HepG2 (cell line): ENCODE measurements at regions of chr20 and their contacts with region 1.

Region 1: DNA sequence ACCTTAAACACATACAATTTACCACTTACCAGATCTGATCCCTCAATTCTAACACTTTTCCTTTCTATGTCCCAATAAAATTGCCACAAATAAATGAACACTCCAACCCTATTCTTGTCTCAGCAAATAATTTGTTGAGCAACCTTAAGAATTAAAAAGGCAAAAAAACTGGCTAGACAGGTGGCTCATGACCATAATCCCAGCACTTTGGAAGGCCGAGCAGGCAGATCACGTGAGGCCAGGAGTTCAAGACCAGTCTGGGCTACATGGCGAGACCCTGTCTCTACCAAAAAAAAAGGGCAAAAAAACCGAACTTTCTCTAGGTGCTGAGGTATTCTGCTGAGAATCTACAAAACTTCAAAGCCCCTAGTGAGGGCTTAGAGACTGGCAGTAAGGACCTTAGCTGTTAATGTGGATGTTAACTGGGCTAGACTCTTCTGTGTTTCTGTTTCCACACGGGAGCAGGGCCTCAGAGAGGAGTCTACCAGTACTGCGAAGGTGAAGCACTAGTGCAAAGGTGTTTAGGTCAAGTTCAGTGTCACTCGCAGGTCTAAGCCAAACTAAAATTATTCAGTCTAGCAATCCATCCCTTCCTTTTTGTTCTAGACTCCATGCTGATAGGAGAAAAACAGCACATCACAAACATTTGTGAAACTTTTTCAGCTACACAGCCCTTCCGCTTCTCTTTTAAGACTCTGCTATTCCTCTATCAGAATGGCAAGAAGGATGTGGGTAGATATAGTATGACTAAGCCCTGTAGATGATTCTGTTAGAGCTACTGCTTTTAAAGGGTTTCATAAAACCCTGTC is 2.6 kb downstream of the FASTKD5 start:
- DNase-seq: no peak
- ATAC-seq: no peak
- H3K4me3 ChIP-seq: peak overlapping the region; percentile 90 to 95 (median 91); a peak in 3 of 6 replicates
- H3K27ac ChIP-seq: no peak overlapping the region
- H3K4me1 ChIP-seq: peaks cover 42% of the 10 kb centered on the region
- H3K27me3 ChIP-seq: no peaks in the 10 kb centered on the region; a peak in 1 of 5 replicates
- CTCF ChIP-seq: no peak
- EP300 ChIP-seq: no peak
- POLR2A ChIP-seq: no peak
- RAD21 ChIP-seq: no peak

Region 2: GRCh38 chr20:3121271-3121911 is 35.6 kb before region 1 on chr20:
- CTCF ChIA-PET with region 1: no interaction called
- POLR2A ChIA-PET with region 1: interaction called, 22 read pairs
- in situ Hi-C with region 1: no loop called
- intact Hi-C with region 1: loop called (anchors 2 kb)
- DNase-seq: no peak
- ATAC-seq: no peak
- H3K4me3 ChIP-seq: no peak overlapping the region
- H3K27ac ChIP-seq: peak overlapping the region; percentile 63
- H3K4me1 ChIP-seq: peaks cover 42% of the 10 kb centered on the region
- H3K27me3 ChIP-seq: no peaks in the 10 kb centered on the region
- CTCF ChIP-seq: no peak
- EP300 ChIP-seq: no peak
- POLR2A ChIP-seq: no peak
- RAD21 ChIP-seq: no peak

Region 3: GRCh38 chr20:3616250-3616649 is 459.2 kb after region 1 on chr20:
- CTCF ChIA-PET with region 1: no interaction called
- POLR2A ChIA-PET with region 1: no interaction called
- in situ Hi-C with region 1: no loop called
- intact Hi-C with region 1: no loop called
- DNase-seq: no peak
- ATAC-seq: peak; percentile 25; the same call in 2 of the 3 replicates
- H3K4me3 ChIP-seq: no peak overlapping the region
- H3K27ac ChIP-seq: no peak overlapping the region
- H3K4me1 ChIP-seq: no peaks in the 10 kb centered on the region
- H3K27me3 ChIP-seq: no peaks in the 10 kb centered on the region
- CTCF ChIP-seq: no peak
- EP300 ChIP-seq: no peak
- POLR2A ChIP-seq: no peak
- RAD21 ChIP-seq: no peak